ENCODE measurements at regions of chr3 and their contacts with region 1.

Region 1: GRCh38 chr3:12706504-12707253 is 42.8 kb upstream of the RAF1 start:
- DNase-seq: peak; percentile 75
- ATAC-seq: peak; percentile 96
- H3K4me3 Mint-ChIP-seq: no peak overlapping the region
- H3K27ac Mint-ChIP-seq: no peak overlapping the region
- H3K4me1 Mint-ChIP-seq: no peaks in the 10 kb centered on the region
- H3K27me3 Mint-ChIP-seq: peaks cover 19% of the 10 kb centered on the region

Region 2: DNA sequence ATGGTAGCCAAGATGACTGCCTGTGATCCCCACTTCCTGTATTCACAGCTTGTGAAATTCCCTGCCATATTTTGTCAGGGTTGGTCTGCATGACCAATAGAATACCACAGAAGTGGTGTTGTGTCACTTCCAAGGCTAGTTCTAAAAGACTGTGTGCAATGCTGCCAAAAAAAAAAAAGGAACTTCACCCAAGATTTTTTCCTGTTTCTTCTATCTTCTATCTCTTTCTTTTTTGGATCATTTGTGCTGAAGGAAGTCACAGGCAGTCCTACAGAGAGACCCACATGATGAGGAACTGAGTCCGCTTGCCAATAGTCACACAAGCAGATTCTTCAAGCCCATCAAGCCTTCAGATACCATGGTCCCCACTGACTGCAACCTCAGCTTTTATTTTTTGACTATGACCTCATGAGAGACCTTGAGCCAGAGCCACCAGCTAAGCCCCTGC is 24.7 kb before region 1 on chr3:
- CTCF ChIA-PET with region 1: interaction called, 11 read pairs
- DNase-seq: no peak
- ATAC-seq: no peak
- H3K4me3 Mint-ChIP-seq: no peak overlapping the region
- H3K27ac Mint-ChIP-seq: no peak overlapping the region
- H3K4me1 Mint-ChIP-seq: peaks cover 5% of the 10 kb centered on the region
- H3K27me3 Mint-ChIP-seq: no peaks in the 10 kb centered on the region

Region 3: GRCh38 chr3:12719984-12720898 is 13.6 kb after region 1 on chr3:
- CTCF ChIA-PET with region 1: interaction called, 27 read pairs
- DNase-seq: peak; percentile 84
- ATAC-seq: peak; percentile 91
- H3K4me3 Mint-ChIP-seq: peak overlapping the region; percentile 15
- H3K27ac Mint-ChIP-seq: no peak overlapping the region
- H3K4me1 Mint-ChIP-seq: peaks cover 15% of the 10 kb centered on the region
- H3K27me3 Mint-ChIP-seq: peaks cover 8% of the 10 kb centered on the region

Measured in activated CD8-positive, alpha-beta memory T cell treated with anti-CD3 and anti-CD28 coated beads, Interleukin-2, amount 10 ng/mL, durations not matched to agents 7 days and 5 days (primary cell).